ENCODE measurements at regions of chr9 and their contacts with region 1.

Region 1: GRCh38 chr9:91193658-91194391 is 167.9 kb downstream of the AUH start:
- DNase-seq: peak; percentile 86 to 91 (median 88)
- H3K4me3 ChIP-seq: peak overlapping the region; percentile 51
- H3K27ac ChIP-seq: peak overlapping the region; percentile 97 to 99
- H3K4me1 ChIP-seq: peaks cover 17% of the 10 kb centered on the region
- H3K27me3 ChIP-seq: no peaks in the 10 kb centered on the region
- CTCF ChIP-seq: peak in 1 of 3 donors; percentile 9
- EP300 ChIP-seq: peak; percentile 92
- POLR2A ChIP-seq: peak; percentile 68

Region 2: DNA sequence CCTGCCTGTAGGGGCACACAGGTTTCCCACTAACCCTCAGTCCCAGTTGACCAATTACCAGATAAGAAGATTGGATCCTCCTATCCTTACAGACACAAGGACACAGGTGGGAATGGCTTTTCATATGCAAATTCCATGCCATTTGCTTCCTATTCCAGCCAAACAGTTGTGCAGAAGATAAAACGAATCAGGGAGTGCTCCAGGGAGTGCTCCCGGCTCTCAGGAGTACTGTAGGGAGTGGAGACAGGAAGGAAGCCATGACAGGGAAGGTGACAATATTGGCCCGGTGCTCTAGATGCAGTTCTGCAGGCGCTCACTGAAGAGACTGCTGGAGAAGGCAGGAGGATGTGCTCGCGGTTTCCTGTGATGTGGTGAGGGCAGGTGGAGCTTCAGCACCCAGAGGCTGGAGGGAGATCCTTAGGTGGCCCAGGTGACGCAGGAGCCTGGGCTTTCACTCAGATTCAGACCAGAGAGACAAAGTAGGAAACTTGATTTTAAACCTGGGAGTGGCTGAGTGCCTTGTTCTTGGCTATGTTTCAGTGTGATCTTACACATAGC is 92.1 kb before region 1 on chr9:
- intact Hi-C with region 1: loop called in 1 of 4 experiments (anchors 5 kb)
- DNase-seq: no peak
- H3K4me3 ChIP-seq: no peak overlapping the region
- H3K27ac ChIP-seq: no peak overlapping the region
- H3K4me1 ChIP-seq: peaks cover 5% of the 10 kb centered on the region
- H3K27me3 ChIP-seq: no peaks in the 10 kb centered on the region
- CTCF ChIP-seq: no peak
- EP300 ChIP-seq: no peak
- POLR2A ChIP-seq: no peak

Region 3: GRCh38 chr9:91117959-91118703 is 75.7 kb before region 1 on chr9:
- intact Hi-C with region 1: loop called in 3 of 4 experiments (anchors 5 kb)
- DNase-seq: peak; percentile 87 to 93 (median 91)
- H3K4me3 ChIP-seq: peak overlapping the region; percentile 17
- H3K27ac ChIP-seq: peak overlapping the region; percentile 79 to 82
- H3K4me1 ChIP-seq: peaks cover 7% of the 10 kb centered on the region
- H3K27me3 ChIP-seq: no peaks in the 10 kb centered on the region
- CTCF ChIP-seq: no peak
- EP300 ChIP-seq: no peak
- POLR2A ChIP-seq: peak; percentile 43

Region 4: GRCh38 chr9:91676046-91676445 is 482.2 kb after region 1 on chr9:
- intact Hi-C with region 1: no loop called
- DNase-seq: no peak
- H3K4me3 ChIP-seq: no peak overlapping the region
- H3K27ac ChIP-seq: no peak overlapping the region
- H3K4me1 ChIP-seq: no peaks in the 10 kb centered on the region
- H3K27me3 ChIP-seq: no peaks in the 10 kb centered on the region
- CTCF ChIP-seq: no peak
- EP300 ChIP-seq: no peak
- POLR2A ChIP-seq: no peak